Sciatic nerve (tissue), 2 donors: ENCODE measurements at regions of chr12 and their contacts with region 1.

Region 1: GRCh38 chr12:16110596-16110995 is 166.9 kb downstream of the SLC15A5 start:
- DNase-seq: no peak
- ATAC-seq: no peak

Region 2: DNA sequence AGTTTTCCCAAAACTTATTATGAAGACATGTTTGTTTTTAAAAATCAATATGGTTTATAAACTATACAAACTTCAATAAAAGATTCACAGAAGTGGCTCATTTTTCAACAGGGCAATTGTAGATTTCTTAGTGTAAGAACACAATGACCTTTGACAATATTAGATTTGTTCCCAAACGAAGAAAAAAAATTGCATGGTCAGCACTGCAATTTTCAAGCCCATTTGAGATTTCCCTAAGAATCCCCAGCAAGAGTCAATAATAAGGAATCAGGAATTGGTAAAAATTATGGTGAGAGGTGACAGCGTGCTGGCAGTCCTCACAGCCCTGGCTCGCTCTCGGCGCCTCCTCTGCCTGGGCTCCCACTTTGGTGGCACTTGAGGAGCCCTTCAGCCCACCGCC is 53.7 kb before region 1 on chr12:
- intact Hi-C with region 1: loop called (anchors 2 kb)
- DNase-seq: no peak
- ATAC-seq: no peak